ENCODE measurements at regions of chr6 and their contacts with region 1.

Region 1: GRCh38 chr6:5205877-5206850 is 54.6 kb downstream of the LYRM4 start:
- DNase-seq: peak in 5 of 6 donors; percentile 54 to 71 (median 64)
- ATAC-seq: peak; percentile 94 to 98 (median 97)
- H3K4me3 ChIP-seq: no peak overlapping the region
- H3K27ac ChIP-seq: peak overlapping the region; percentile 0 to 51 (median 34)
- H3K4me1 ChIP-seq: peaks cover 4 to 15% (median 9%) of the 10 kb centered on the region in 3 donors
- H3K27me3 ChIP-seq: no peaks in the 10 kb centered on the region
- CTCF ChIP-seq: no peak

Region 2: DNA sequence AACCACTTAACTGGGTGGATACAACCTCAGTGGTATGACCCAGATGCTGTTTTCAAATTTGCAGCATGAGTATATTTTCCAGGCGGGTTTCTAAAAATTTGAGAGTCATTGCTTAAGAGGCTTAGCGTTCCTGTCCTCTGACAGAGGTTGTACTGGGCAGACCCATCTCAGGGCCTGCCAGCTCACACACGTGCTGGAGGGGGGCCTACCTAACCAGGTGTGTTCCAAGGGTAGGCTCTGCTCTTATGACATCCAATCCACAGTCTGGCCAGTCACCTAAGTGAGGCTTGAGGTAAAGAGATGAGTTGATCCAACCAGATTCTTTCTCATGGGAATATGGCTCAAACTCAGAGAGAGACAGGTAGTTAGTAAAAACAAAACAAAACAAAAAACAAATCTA is 53.3 kb after region 1 on chr6:
- intact Hi-C with region 1: loop called in 1 of 3 experiments (anchors 5 kb)
- DNase-seq: no peak
- ATAC-seq: no peak
- H3K4me3 ChIP-seq: peak overlapping the region in 2 of 4 donors; percentile 55 to 71
- H3K27ac ChIP-seq: no peak overlapping the region
- H3K4me1 ChIP-seq: peaks cover 0 to 14% (median 13%) of the 10 kb centered on the region in 3 donors
- H3K27me3 ChIP-seq: no peaks in the 10 kb centered on the region
- CTCF ChIP-seq: no peak